Breast epithelium (tissue), 4 donors: ENCODE measurements at regions of chr9 and their contacts with region 1.

Region 1: GRCh38 chr9:78954286-78954685 is 617.5 kb upstream of the TLE4 start:
- DNase-seq: no peak
- H3K4me3 ChIP-seq: no peak overlapping the region
- H3K27ac ChIP-seq: no peak overlapping the region
- H3K4me1 ChIP-seq: no peaks in the 10 kb centered on the region
- H3K27me3 ChIP-seq: no peaks in the 10 kb centered on the region
- CTCF ChIP-seq: no peak
- POLR2A ChIP-seq: no peak

Region 2: GRCh38 chr9:78919701-78920100 is 34.6 kb before region 1 on chr9:
- intact Hi-C with region 1: no loop called
- DNase-seq: no peak
- H3K4me3 ChIP-seq: no peak overlapping the region
- H3K27ac ChIP-seq: no peak overlapping the region
- H3K4me1 ChIP-seq: no peaks in the 10 kb centered on the region
- H3K27me3 ChIP-seq: no peaks in the 10 kb centered on the region
- CTCF ChIP-seq: no peak
- POLR2A ChIP-seq: no peak

Region 3: DNA sequence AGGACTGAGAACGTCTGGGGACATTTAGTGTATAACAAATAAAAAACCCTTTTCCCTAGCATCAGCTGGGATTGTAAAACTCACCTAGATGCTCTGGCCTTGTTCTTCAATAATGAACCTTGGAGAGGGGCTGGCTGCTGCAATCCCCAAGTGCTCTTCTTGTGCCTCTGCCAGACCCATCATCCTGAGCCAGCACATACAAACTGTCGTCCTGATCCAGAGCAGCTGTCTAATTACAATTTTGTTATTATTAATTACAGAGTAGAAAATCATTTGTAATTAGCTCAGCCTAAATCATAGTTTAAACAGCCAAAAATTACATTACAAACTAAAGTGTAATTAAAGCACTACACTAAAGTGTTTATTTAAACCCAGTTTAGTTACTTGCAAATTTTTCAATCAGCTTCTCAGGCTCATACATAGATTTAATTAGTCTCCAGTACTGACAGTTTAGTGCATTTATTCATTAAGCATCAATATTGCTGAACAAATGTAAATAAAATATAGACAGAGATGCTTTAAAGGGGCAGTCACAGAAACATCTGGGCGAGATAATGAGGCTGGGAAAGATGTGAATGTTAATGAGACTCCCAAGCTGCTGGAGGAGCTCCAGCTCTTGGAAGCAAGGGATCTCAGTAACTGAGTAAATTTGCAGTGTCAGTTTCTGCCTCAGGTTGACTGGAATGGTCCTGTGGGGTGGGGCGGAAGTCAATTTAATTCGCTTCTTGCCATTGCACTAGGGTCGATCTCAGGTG is 14.8 kb before region 1 on chr9:
- intact Hi-C with region 1: loop called (anchors 1 kb)
- DNase-seq: no peak
- H3K4me3 ChIP-seq: no peak overlapping the region
- H3K27ac ChIP-seq: no peak overlapping the region
- H3K4me1 ChIP-seq: no peaks in the 10 kb centered on the region
- H3K27me3 ChIP-seq: no peaks in the 10 kb centered on the region
- CTCF ChIP-seq: no peak
- POLR2A ChIP-seq: no peak